Right cardiac atrium (tissue), 5 donors: ENCODE measurements at regions of chr1 and their contacts with region 1.

Region 1: GRCh38 chr1:65254319-65255034 is 54.9 kb upstream of the DNAJC6 start:
- DNase-seq: peak; percentile 77 to 92 (median 91)
- ATAC-seq: peak; percentile 90 to 93
- H3K4me3 ChIP-seq: peak overlapping the region; percentile 78
- H3K27ac ChIP-seq: peak overlapping the region; percentile 65
- H3K4me1 ChIP-seq: no peaks in the 10 kb centered on the region
- H3K27me3 ChIP-seq: no peaks in the 10 kb centered on the region

Region 2: DNA sequence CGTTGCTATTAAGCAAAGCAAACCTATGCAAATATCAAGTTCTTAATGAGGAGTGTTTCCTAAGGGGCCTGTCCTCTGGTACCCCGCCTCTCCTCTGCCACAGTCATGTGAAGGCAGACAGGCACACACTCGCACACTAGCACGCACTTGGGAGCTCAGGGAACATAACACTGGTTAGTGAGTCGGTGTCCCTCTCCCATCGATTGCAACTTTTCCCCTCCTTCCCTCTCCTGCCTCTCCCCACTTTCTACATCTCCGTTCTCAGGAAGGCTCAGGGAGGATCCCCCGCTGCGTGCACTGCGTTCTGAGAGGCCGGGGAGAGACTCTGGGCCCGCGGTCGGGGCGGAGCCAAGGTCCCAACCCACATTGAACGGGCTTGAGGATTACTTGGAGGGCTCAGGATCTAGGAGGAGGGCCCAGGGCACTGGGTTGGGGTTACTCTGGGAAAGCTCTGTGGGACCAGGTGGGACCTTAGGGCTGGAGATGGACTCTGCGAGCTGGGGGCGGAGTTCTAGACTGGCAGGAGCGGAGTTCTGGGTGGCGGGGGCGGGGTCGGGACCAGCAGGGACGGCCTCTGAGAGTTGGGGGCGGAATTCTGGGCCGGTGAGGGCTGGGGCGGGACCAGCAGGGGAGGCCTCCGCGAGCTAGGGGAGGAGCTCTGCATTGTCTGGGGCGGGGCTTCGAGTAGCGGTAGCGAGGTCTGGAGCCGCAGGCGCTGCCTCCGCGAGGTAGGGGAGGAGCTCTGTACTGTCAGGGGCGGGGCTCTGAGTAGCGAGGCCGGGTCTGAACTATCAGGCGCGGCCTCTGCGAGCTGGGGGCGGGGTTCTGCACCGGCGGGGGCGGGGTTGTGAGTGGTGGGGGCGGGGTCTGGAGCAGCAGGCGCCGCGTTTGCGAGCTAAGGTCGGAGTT is 165.5 kb after region 1 on chr1:
- intact Hi-C with region 1: loop called in 2 of 4 experiments (anchors 10 kb)
- DNase-seq: peak; percentile 99 to 100 (median 99)
- ATAC-seq: peak; percentile 98 to 99
- H3K4me3 ChIP-seq: peak overlapping the region; percentile 81
- H3K27ac ChIP-seq: peak overlapping the region; percentile 96
- H3K4me1 ChIP-seq: peaks cover 10% of the 10 kb centered on the region
- H3K27me3 ChIP-seq: no peaks in the 10 kb centered on the region